Activated naive CD4-positive, alpha-beta T cell treated with anti-CD3 and anti-CD28 coated beads, Interleukin-2, amount 10 ng/mL, durations not matched to agents 7 days and 5 days (primary cell): ENCODE measurements at regions of chr6 and their contacts with region 1.

Region 1: DNA sequence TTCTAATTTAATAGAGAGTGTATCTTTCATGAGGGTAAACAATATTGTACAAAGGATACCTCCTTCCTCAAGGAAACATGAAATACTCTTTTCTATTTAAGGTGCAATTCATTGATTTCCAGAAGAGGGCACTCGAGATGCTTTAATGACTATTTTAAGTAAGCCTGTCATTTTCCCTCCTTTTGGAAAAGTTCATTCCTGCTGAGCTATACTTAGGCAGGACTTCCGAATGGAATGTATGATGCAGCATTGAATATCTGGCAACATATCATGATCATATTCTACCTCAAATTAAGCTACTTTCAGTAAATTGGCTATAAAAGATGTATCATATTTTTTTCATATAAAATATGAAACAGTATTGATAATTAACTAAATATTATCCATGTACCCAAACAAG is 5.0 kb downstream of the DST start:
- DNase-seq: no peak
- H3K4me3 Mint-ChIP-seq: no peak overlapping the region
- H3K27ac Mint-ChIP-seq: no peak overlapping the region
- H3K4me1 Mint-ChIP-seq: no peaks in the 10 kb centered on the region
- H3K27me3 Mint-ChIP-seq: no peaks in the 10 kb centered on the region

Region 2: GRCh38 chr6:56699066-56699654 is 61.5 kb after region 1 on chr6:
- CTCF ChIA-PET with region 1: interaction called, 21 read pairs
- DNase-seq: no peak
- H3K4me3 Mint-ChIP-seq: no peak overlapping the region
- H3K27ac Mint-ChIP-seq: no peak overlapping the region
- H3K4me1 Mint-ChIP-seq: no peaks in the 10 kb centered on the region
- H3K27me3 Mint-ChIP-seq: no peaks in the 10 kb centered on the region